ENCODE measurements at regions of chr21 and their contacts with region 1.

Region 1: GRCh38 chr21:38355992-38356797 is 99.4 kb downstream of the KCNJ15 start:
- H3K4me3 Mint-ChIP-seq: no peak overlapping the region
- H3K27ac Mint-ChIP-seq: no peak overlapping the region
- H3K4me1 Mint-ChIP-seq: peaks cover 12% of the 10 kb centered on the region
- H3K27me3 Mint-ChIP-seq: peaks cover 15% of the 10 kb centered on the region

Region 2: GRCh38 chr21:37711836-37712568 is 644.2 kb before region 1 on chr21:
- intact Hi-C with region 1: loop called (anchors 5 kb)
- H3K4me3 Mint-ChIP-seq: no peak overlapping the region
- H3K27ac Mint-ChIP-seq: no peak overlapping the region
- H3K4me1 Mint-ChIP-seq: no peaks in the 10 kb centered on the region
- H3K27me3 Mint-ChIP-seq: peaks cover 22% of the 10 kb centered on the region

Region 3: DNA sequence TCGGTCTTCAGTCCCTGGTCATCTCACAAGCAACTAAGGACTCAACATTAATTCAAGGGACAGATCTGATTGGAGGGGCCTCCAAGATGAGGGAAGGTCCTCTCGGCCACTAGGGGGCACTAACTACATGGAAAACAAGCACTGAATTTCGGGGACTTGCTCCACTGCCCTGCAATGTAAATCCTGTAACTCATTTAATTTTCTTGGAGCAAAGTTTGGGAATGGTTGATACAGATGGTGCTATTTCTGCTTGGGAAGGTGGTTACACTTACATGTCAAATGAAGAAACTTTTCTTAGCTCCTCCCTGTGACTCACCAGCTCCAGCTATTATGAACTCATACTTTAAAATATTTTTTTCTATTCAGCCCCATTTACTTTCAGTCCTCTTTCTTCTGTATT is 196.8 kb before region 1 on chr21:
- intact Hi-C with region 1: loop called (anchors 1 kb)
- H3K4me3 Mint-ChIP-seq: no peak overlapping the region
- H3K27ac Mint-ChIP-seq: no peak overlapping the region
- H3K4me1 Mint-ChIP-seq: peaks cover 6% of the 10 kb centered on the region
- H3K27me3 Mint-ChIP-seq: peaks cover 26% of the 10 kb centered on the region

Region 4: DNA sequence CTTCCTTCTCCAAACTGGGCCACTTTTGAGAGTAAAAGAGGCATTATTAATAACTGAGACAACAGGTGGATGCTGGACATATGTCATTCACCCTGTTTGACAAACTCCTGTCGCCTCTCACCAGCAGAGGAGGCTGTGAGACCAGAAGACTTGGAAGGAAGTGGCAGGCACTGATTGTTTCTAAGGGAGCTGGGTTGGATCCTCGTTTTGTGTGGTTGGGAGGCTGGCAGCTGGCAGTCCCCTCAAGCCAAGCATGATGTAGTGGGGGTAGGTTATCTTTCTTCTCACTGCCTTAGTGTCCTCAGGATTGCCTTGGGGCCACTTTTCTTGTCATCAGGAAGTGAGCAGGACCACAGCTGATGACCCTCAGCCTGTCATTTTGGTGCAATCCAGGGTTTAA is 185.9 kb before region 1 on chr21:
- intact Hi-C with region 1: loop called (anchors 1 kb)
- H3K4me3 Mint-ChIP-seq: no peak overlapping the region
- H3K27ac Mint-ChIP-seq: peak overlapping the region; percentile 25
- H3K4me1 Mint-ChIP-seq: peaks cover 14% of the 10 kb centered on the region
- H3K27me3 Mint-ChIP-seq: peaks cover 10% of the 10 kb centered on the region

Region 5: GRCh38 chr21:38219049-38219628 is 137.1 kb before region 1 on chr21:
- intact Hi-C with region 1: loop called (anchors 1 kb)
- H3K4me3 Mint-ChIP-seq: no peak overlapping the region
- H3K27ac Mint-ChIP-seq: no peak overlapping the region
- H3K4me1 Mint-ChIP-seq: peaks cover 32% of the 10 kb centered on the region
- H3K27me3 Mint-ChIP-seq: peaks cover 2% of the 10 kb centered on the region